Upper lobe of right lung (tissue), 1 donor: ENCODE measurements at regions of chr15 and their contacts with region 1.

Region 1: DNA sequence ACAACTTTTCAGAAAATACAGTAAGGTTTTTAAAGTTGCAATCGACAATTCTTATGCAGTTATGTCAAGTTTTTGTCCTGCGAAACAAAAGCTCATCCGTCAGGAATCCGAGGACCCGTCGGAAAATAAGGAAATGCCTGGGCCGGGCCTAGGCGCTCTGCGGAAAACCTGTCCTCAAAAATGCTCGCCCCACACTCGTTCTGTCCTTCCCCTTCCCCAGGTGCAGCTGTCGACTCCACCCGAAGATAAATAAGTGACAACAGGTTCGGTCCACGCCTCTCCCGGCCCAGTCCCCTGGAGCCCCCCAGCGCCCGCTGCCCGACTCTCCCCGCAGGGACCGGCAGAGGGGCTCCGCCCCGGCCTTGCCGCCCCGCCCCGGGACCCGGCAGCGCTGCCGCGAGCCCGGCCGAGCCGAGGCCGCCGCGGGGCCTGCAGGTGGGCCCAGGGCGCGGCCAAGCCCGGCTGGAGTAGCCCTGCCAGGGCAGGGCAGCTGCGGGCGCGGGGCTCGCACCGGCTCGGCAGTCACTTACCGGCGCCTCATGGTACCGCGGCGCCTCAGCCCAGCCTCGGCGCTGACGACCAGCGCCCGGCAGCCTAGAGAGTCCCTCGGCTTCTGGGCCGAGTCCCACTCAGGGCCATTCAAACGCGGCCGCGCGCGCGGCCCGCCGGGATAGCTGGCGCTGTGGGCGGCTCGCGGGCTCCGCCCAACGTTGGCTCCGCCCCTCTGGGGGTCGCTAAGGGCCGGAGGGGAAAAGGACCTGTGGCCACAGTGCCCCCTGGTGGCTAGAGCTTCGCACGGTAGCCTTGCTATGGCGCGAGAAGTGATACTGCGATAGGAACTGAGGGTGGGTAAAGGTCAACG is at the start of gene KATNBL1:
- DNase-seq: peak; percentile 99
- ATAC-seq: peak; percentile 99
- H3K4me3 ChIP-seq: peak within 1 kb of the TSS; percentile 57
- H3K27ac ChIP-seq: peak within 1 kb of the TSS; percentile 83
- H3K4me1 ChIP-seq: no peaks in the 10 kb centered on the region
- H3K27me3 ChIP-seq: no peaks in the 10 kb centered on the region
- CTCF ChIP-seq: peak; percentile 94
- total RNA-seq, gene KATNBL1: 37.9 TPM

Region 2: GRCh38 chr15:34049112-34049511 is 160.5 kb before region 1 on chr15:
- intact Hi-C with region 1: no loop called
- DNase-seq: no peak
- ATAC-seq: no peak
- H3K4me3 ChIP-seq: no peak overlapping the region
- H3K27ac ChIP-seq: no peak overlapping the region
- H3K4me1 ChIP-seq: no peaks in the 10 kb centered on the region
- H3K27me3 ChIP-seq: no peaks in the 10 kb centered on the region
- CTCF ChIP-seq: no peak

Region 3: GRCh38 chr15:34065941-34066340 is 143.7 kb before region 1 on chr15:
- intact Hi-C with region 1: loop called (anchors 10 kb)
- DNase-seq: no peak
- ATAC-seq: no peak
- H3K4me3 ChIP-seq: no peak overlapping the region
- H3K27ac ChIP-seq: no peak overlapping the region
- H3K4me1 ChIP-seq: no peaks in the 10 kb centered on the region
- H3K27me3 ChIP-seq: no peaks in the 10 kb centered on the region
- CTCF ChIP-seq: no peak

Region 4: DNA sequence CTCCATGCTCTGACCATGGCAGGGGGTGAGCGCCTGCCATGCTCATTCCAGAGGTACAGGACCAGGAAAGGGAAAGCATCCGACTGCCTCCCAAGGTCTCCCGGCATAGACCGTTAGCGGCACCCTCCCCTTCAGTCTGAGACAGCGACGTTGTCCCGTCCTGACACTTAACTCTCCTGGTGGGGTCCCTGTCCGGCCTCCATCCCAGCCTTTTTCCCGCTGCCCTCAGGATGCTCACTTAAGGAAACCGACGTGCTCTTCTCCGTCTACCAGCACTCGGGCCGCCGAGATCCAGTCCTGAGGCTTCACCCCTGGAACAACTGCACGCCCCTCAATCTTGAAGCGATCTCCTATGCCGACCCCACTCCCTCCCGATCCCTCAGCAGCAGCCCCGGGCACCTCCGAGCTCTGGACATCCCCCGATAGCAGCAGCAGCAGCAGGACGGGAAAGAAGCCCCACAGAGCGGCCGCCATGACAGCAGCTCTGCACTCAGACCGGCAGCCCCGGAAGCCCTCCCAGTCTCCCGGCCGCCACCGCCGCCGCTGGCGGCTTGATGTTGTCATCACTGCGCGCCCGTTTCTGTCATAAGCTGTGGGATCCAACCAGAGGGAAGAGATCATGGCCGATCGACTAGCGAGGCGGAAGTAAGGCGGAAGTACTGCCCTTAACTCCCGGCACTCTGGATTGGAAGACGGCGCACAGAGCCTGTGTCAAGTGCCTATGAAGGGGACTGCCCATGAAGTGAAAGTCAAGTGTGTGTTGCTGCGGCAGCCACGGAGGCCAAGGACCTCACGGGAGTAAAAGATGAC is 108.1 kb before region 1 on chr15 and contains the starts of genes EMC7 and PGBD4:
- intact Hi-C with region 1: loop called (anchors 10 kb)
- DNase-seq: peak; percentile 99
- ATAC-seq: peak; percentile 99
- H3K4me3 ChIP-seq: peak within 1 kb of the TSS; percentile 96
- H3K27ac ChIP-seq: peak within 1 kb of the TSS; percentile 94
- H3K4me1 ChIP-seq: peaks cover 25% of the 10 kb centered on the region
- H3K27me3 ChIP-seq: no peaks in the 10 kb centered on the region
- CTCF ChIP-seq: no peak
- total RNA-seq, gene EMC7: 66.8 TPM
- total RNA-seq, gene PGBD4: 1.3 TPM